Transverse colon (tissue), 4 donors: ENCODE measurements at regions of chr19 and their contacts with region 1.

Region 1: GRCh38 chr19:11482384-11483050 is 1.7 kb upstream of the ELAVL3 start:
- DNase-seq: peak; percentile 87
- H3K4me3 ChIP-seq: peak overlapping the region in 2 of 4 donors; percentile 9 to 40
- H3K27ac ChIP-seq: no peak overlapping the region
- H3K4me1 ChIP-seq: peaks cover 7 to 32% (median 26%) of the 10 kb centered on the region in 4 donors
- H3K27me3 ChIP-seq: peaks cover 56% of the 10 kb centered on the region
- CTCF ChIP-seq: peak; percentile 87 to 96 (median 94)
- EP300 ChIP-seq: no peak
- POLR2A ChIP-seq: no peak

Region 2: DNA sequence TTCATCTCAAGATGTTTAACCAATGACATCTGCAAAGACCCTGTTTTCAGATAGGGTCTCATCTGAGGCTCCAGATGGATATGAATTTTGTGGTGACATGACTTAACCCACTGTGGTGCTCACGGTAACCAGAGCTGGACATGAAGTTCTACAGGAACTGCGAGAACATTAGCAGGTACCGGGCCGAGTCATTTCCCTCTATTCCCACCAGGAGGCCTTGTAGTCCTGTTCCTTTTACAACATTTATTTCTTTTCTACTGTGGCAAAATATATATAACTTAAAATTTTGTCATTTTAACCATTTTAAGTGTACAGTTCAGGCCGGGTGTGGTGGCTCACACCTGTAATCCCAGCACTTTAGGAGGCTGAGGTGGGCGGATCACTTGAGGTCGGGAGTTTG is 194.2 kb before region 1 on chr19:
- in situ Hi-C with region 1: loop called in 2 of 4 experiments (anchors 10 to 25 kb)
- intact Hi-C with region 1: no loop called
- DNase-seq: no peak
- H3K4me3 ChIP-seq: no peak overlapping the region
- H3K27ac ChIP-seq: no peak overlapping the region
- H3K4me1 ChIP-seq: peaks cover 0 to 6% (median under 1%) of the 10 kb centered on the region in 4 donors
- H3K27me3 ChIP-seq: no peaks in the 10 kb centered on the region
- CTCF ChIP-seq: peak; percentile 24 to 49 (median 39)
- EP300 ChIP-seq: no peak
- POLR2A ChIP-seq: no peak

Region 3: DNA sequence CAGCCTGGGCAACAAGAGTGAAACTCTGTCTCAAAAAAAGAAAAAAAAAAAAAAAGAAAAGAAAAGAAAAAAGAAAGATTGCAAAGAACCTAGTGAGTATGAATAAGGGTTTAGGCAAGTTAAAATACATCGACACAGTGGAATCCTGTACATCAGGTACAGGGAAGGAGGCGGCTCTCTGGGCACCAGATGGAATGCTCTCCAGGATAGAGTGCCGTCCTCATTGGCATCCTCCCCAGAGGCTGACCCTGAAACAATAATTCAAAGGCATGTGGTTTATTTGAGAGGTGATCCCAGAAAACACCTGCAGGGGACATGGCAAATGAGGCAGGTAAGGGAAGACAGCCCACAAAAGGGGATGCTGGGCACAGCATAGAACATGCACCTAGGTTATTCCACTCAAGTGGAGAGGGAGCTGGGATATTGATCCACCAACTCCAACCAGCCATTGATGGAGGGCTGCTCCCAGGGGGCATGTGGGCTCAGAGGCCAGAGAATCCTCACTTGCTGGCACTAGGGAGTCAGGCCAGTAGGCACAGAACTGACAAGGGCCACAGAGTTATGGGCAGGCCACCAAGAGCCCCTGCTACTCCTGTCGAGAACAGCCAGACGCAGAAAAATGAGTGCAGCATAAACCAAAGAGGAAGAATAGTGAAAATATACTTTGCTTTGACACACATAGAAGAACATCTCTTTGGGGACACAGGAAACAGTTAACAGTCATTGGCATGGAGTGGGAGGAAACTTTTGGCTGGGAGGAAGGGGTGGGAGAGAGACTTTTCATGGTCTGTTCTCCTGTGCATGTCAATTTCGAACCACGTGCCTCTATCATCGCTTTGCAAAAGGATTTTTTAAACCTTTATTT is 182.3 kb before region 1 on chr19:
- in situ Hi-C with region 1: loop called in 1 of 4 experiments (anchors 25 kb)
- intact Hi-C with region 1: loop called (anchors 10 kb)
- DNase-seq: no peak
- H3K4me3 ChIP-seq: no peak overlapping the region
- H3K27ac ChIP-seq: no peak overlapping the region
- H3K4me1 ChIP-seq: peaks cover 0 to 23% (median 10%) of the 10 kb centered on the region in 4 donors
- H3K27me3 ChIP-seq: peaks cover 15% of the 10 kb centered on the region
- CTCF ChIP-seq: no peak
- EP300 ChIP-seq: no peak
- POLR2A ChIP-seq: no peak

Region 4: DNA sequence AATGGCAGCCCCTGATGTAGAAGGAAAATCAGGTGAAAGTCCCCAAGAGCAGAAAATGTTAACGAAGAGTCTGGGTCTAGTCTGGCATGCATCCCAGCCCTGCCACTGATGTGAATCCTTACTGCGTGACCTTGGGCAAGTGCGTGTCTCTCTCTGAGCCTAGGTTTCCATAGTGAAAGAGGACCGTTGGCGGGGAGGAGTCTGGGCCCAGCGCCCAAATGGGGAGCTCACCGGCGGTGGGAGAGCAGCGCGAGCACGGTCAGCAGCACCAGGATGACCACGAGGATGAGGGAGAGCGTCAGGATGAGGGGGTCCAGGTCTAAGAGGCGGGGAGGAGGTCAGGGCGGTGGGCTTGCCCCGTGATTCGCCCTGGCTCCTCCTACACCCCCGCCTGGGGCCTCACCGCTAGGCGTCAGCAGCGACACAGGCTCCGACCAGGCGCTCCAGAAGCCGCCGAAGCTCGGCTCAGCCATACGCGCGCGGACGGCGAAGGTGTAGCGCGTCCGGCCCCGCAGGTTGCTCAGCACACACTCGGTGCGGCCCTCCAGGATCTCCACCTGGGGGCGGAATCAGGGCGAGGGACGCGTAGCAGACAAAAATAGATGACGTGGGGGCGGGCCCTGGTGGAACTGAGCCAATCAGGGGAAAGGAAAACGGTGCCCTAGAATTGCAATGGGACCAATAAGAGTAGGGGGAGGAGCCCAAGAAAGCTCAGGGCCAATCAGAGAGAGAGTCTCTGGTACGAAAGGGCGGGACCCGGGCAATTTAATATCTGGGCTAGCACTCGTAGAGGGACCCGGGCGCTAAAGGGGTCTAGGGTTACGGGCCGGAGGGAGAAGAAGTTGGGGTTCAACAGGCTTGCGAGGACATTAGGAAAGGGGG is 101.6 kb before region 1 on chr19:
- in situ Hi-C with region 1: loop called in 1 of 4 experiments (anchors 25 kb)
- intact Hi-C with region 1: no loop called
- DNase-seq: peak; percentile 96
- H3K4me3 ChIP-seq: peak overlapping the region; percentile 41 to 64 (median 44)
- H3K27ac ChIP-seq: peak overlapping the region; percentile 84 to 89 (median 86)
- H3K4me1 ChIP-seq: peaks cover 30 to 66% (median 52%) of the 10 kb centered on the region in 4 donors
- H3K27me3 ChIP-seq: peaks cover 18% of the 10 kb centered on the region
- CTCF ChIP-seq: peak; percentile 72 to 92 (median 82)
- EP300 ChIP-seq: no peak
- POLR2A ChIP-seq: peak; percentile 84

Region 5: GRCh38 chr19:11699931-11700794 is 217.6 kb after region 1 on chr19:
- in situ Hi-C with region 1: no loop called
- intact Hi-C with region 1: no loop called
- DNase-seq: no peak
- H3K4me3 ChIP-seq: no peak overlapping the region
- H3K27ac ChIP-seq: no peak overlapping the region
- H3K4me1 ChIP-seq: peaks cover 0 to 1% (median 1%) of the 10 kb centered on the region in 4 donors
- H3K27me3 ChIP-seq: no peaks in the 10 kb centered on the region
- CTCF ChIP-seq: peak; percentile 63 to 73 (median 67)
- EP300 ChIP-seq: no peak
- POLR2A ChIP-seq: no peak

Region 6: GRCh38 chr19:12145348-12145747 is 662.8 kb after region 1 on chr19:
- in situ Hi-C with region 1: no loop called
- intact Hi-C with region 1: no loop called
- DNase-seq: no peak
- H3K4me3 ChIP-seq: no peak overlapping the region
- H3K27ac ChIP-seq: no peak overlapping the region
- H3K4me1 ChIP-seq: peaks cover 6 to 10% (median 8%) of the 10 kb centered on the region in 4 donors
- H3K27me3 ChIP-seq: no peaks in the 10 kb centered on the region
- CTCF ChIP-seq: no peak
- EP300 ChIP-seq: no peak
- POLR2A ChIP-seq: no peak